ENCODE measurements at regions of chr17 and their contacts with region 1.

Region 1: DNA sequence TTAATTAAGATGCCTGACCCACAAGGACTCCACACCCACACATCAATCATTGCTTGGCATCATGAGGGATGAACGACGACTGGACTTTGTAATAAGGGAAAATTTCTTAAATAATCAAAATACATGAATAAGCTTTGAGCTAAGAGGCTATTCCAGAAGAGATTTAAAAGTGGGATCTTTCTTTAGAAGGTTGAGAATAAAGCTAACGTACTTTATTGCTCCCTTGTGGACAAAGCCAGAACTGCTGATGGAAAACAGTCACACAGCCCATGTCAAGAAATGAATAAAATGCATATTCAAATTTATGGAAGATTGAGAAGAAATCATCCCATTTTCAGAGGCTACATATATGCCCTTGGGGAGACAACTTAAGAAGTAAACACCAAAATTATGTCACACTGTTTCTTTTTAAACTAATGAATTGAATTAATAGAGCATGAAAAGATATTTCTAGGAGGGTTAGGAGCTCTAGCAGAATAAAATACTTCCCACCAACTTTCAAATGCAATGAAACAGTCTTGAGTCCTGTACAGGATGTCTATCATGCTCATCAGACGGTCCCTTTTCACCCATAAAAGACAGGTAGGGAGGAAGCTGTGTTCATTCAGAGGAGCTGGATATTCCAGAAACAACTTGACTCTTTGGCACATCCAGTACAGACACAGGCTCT is 60.2 kb upstream of the PHOSPHO1 start:
- DNase-seq: peak; percentile 39
- ATAC-seq: peak; percentile 45
- H3K4me3 Mint-ChIP-seq: no peak overlapping the region
- H3K27ac Mint-ChIP-seq: no peak overlapping the region
- H3K4me1 Mint-ChIP-seq: peaks cover 6% of the 10 kb centered on the region
- H3K27me3 Mint-ChIP-seq: no peaks in the 10 kb centered on the region
- CTCF ChIP-seq: peak; percentile 83

Region 2: GRCh38 chr17:49086649-49087048 is 204.2 kb before region 1 on chr17:
- CTCF ChIA-PET with region 1: no interaction called
- POLR2A ChIA-PET with region 1: no interaction called
- intact Hi-C with region 1: no loop called
- DNase-seq: no peak
- ATAC-seq: no peak
- H3K4me3 Mint-ChIP-seq: no peak overlapping the region
- H3K27ac Mint-ChIP-seq: no peak overlapping the region
- H3K4me1 Mint-ChIP-seq: no peaks in the 10 kb centered on the region
- H3K27me3 Mint-ChIP-seq: peaks cover 17% of the 10 kb centered on the region
- CTCF ChIP-seq: no peak

Region 3: GRCh38 chr17:49180303-49180702 is 110.5 kb before region 1 on chr17:
- CTCF ChIA-PET with region 1: interaction called, 34 read pairs
- POLR2A ChIA-PET with region 1: interaction called, 3 read pairs
- intact Hi-C with region 1: no loop called
- DNase-seq: peak; percentile 82
- ATAC-seq: peak; percentile 37
- H3K4me3 Mint-ChIP-seq: no peak overlapping the region
- H3K27ac Mint-ChIP-seq: no peak overlapping the region
- H3K4me1 Mint-ChIP-seq: peaks cover 4% of the 10 kb centered on the region
- H3K27me3 Mint-ChIP-seq: no peaks in the 10 kb centered on the region
- CTCF ChIP-seq: peak; percentile 99

Region 4: DNA sequence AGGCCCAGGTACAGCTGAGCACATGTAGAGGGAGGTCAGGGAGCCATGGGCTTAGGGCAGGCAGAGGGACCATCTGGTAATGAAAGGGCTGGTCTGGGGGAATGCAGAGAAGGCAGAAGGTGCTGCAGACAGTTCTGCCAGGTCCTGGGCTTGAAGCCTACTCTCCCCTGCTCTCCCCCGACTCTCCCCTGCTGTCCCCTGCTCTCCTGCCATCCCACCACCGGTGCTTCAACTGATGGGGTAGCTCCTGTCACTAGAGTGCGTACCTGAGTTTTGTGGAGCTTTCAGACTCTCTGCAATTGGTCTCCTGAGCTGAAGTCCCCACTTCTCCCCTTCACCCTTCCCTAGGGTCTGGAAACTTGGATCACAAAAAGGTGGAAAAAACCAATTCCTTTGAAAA is 22.9 kb before region 1 on chr17:
- CTCF ChIA-PET with region 1: interaction called, 10 read pairs
- POLR2A ChIA-PET with region 1: interaction called, 3 read pairs
- intact Hi-C with region 1: no loop called
- DNase-seq: no peak
- ATAC-seq: no peak
- H3K4me3 Mint-ChIP-seq: no peak overlapping the region
- H3K27ac Mint-ChIP-seq: no peak overlapping the region
- H3K4me1 Mint-ChIP-seq: no peaks in the 10 kb centered on the region
- H3K27me3 Mint-ChIP-seq: peaks cover 8% of the 10 kb centered on the region
- CTCF ChIP-seq: no peak

Region 5: GRCh38 chr17:49775543-49776260 is 484.9 kb after region 1 on chr17:
- CTCF ChIA-PET with region 1: no interaction called
- POLR2A ChIA-PET with region 1: no interaction called
- intact Hi-C with region 1: no loop called
- DNase-seq: no peak
- ATAC-seq: no peak
- H3K4me3 Mint-ChIP-seq: no peak overlapping the region
- H3K27ac Mint-ChIP-seq: no peak overlapping the region
- H3K4me1 Mint-ChIP-seq: peaks cover 6% of the 10 kb centered on the region
- H3K27me3 Mint-ChIP-seq: no peaks in the 10 kb centered on the region
- CTCF ChIP-seq: no peak

Measured in activated CD8-positive, alpha-beta T cell treated with anti-CD3 and anti-CD28 coated beads for 36 hours (primary cell).